ENCODE measurements at regions of chr16 and their contacts with region 1.

Region 1: GRCh38 chr16:86575754-86576557 is 2.4 kb upstream of the FOXL1 start:
- DNase-seq: peak; percentile 95
- H3K4me3 ChIP-seq: peak overlapping the region; percentile 76
- H3K27ac ChIP-seq: peak overlapping the region; percentile 100
- H3K27me3 ChIP-seq: no peaks in the 10 kb centered on the region
- CTCF ChIP-seq: peak; percentile 86

Region 2: DNA sequence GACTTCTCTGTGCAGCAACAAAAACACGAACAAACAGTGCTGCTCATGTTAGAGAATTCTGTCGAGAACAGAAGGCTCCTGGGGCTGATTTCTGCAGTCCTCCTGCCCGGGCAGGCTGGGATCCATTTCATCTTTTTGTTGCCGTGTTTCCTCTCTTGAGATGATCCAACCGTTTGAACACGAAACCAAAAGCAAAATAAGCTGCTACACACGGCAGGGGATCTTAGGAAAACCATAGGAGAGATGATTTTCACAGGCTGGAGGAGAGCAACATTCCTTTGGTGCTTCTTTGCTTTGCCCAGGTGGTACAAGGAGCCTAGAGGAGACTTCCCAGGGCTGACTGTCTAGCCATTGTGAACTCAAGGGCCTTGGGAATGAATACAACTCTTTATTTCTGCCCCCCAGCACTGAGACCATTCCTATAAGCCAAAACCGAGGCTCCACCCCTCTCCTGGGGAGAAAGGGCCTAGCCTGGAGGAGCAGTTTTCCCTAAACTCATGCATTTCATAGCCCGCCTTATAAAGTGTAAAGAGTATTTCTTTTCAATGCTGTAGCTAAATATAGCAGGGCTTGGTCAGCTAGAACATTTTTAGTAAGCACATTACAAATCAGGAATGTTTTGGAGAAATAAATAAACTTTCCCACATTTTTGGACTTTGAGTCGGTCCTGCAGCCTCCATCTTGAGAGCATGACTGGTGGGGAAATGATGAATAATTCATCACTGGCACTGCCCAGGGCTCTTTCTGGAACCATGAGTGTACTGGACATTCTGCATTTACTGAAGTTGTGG is 10.1 kb after region 1 on chr16:
- CTCF ChIA-PET with region 1: no interaction called
- POLR2A ChIA-PET with region 1: interaction called, 10 read pairs
- DNase-seq: peak; percentile 71
- H3K4me3 ChIP-seq: peak overlapping the region; percentile 38
- H3K27ac ChIP-seq: peak overlapping the region; percentile 99
- H3K27me3 ChIP-seq: no peaks in the 10 kb centered on the region
- CTCF ChIP-seq: no peak

Region 3: GRCh38 chr16:86664533-86665318 is 88.8 kb after region 1 on chr16:
- CTCF ChIA-PET with region 1: no interaction called
- POLR2A ChIA-PET with region 1: interaction called, 23 read pairs
- DNase-seq: peak; percentile 81
- H3K4me3 ChIP-seq: no peak overlapping the region
- H3K27ac ChIP-seq: peak overlapping the region; percentile 89
- H3K27me3 ChIP-seq: no peaks in the 10 kb centered on the region
- CTCF ChIP-seq: no peak

Region 4: GRCh38 chr16:86669937-86670749 is 94.2 kb after region 1 on chr16:
- CTCF ChIA-PET with region 1: no interaction called
- POLR2A ChIA-PET with region 1: interaction called, 23 read pairs
- DNase-seq: peak; percentile 58
- H3K4me3 ChIP-seq: no peak overlapping the region; the same call in 1 of the 2 replicates
- H3K27ac ChIP-seq: peak overlapping the region; percentile 70
- H3K27me3 ChIP-seq: no peaks in the 10 kb centered on the region
- CTCF ChIP-seq: no peak

Measured in AG04450 (cell line).